ENCODE measurements at regions of chr3 and their contacts with region 1.

Region 1: GRCh38 chr3:27467545-27467944 is 16.6 kb downstream of the SLC4A7 start:
- DNase-seq: no peak
- H3K4me3 Mint-ChIP-seq: no peak overlapping the region
- H3K27ac Mint-ChIP-seq: no peak overlapping the region
- H3K4me1 Mint-ChIP-seq: peaks cover 9% of the 10 kb centered on the region
- H3K27me3 Mint-ChIP-seq: no peaks in the 10 kb centered on the region

Region 2: DNA sequence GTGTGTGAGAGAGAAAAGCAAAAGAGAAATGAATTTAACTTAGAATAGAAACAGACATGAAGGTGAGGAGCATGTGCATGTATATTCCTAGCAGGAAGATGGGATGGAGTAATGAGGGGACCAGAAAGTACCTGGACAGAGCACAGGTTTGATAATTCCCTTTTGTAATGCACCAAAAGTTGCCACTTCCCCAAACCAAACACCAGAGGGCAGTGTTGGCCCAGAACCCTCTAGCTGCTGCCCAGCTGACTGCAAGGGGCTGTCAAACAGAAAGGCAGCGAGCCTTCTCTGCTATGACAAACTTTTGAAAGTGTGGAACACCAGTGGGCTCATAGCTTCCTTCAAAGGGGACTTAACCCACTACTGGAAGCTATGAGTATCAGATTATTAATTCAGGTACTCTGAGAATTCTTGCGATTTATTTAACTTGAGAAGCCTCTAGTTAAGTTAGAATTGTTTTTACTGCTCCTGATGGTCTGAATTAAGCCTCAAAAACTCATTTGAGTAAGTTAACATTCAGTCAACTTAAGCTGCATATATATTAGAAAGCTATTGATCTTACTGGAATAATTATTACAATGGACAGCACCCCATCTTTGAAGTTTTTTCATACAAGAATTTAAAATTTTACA is 333.3 kb before region 1 on chr3:
- CTCF ChIA-PET with region 1: interaction called, 10 read pairs
- DNase-seq: peak; percentile 68
- H3K4me3 Mint-ChIP-seq: no peak overlapping the region
- H3K27ac Mint-ChIP-seq: no peak overlapping the region
- H3K4me1 Mint-ChIP-seq: no peaks in the 10 kb centered on the region
- H3K27me3 Mint-ChIP-seq: no peaks in the 10 kb centered on the region

Region 3: DNA sequence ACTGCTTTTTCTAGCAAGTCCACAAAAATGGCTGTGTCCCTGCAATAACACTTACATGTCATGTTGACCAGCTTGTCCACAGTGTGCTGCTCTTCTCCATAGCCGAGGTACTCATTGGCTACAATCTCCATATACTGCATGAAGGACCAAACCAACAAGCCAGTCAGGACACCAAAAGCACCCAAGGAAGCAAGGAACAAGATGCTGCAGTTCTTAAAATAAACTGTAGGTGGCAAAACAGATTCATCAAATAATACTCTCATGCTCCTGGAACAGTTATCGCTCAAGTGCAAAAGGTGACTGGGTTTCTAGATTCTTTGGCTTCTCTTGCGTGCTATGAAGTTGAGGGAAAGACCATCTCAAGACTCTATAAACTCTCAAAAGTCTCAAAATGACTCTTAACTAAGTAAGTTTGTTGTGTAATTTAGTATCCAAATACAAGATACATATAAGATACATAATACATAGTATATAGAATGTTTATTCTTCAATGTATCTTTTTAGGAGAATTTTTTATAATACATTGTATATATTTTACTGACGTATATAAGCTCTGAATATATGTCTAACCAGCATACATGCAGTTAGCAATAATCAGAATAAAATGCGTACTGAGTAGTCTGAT is 155.4 kb before region 1 on chr3:
- CTCF ChIA-PET with region 1: interaction called, 30 read pairs
- DNase-seq: no peak
- H3K4me3 Mint-ChIP-seq: no peak overlapping the region
- H3K27ac Mint-ChIP-seq: no peak overlapping the region
- H3K4me1 Mint-ChIP-seq: no peaks in the 10 kb centered on the region
- H3K27me3 Mint-ChIP-seq: peaks cover 10% of the 10 kb centered on the region

Region 4: GRCh38 chr3:27357665-27358258 is 109.8 kb before region 1 on chr3:
- CTCF ChIA-PET with region 1: interaction called, 16 read pairs
- DNase-seq: peak; percentile 71
- H3K4me3 Mint-ChIP-seq: no peak overlapping the region
- H3K27ac Mint-ChIP-seq: peak overlapping the region; percentile 24
- H3K4me1 Mint-ChIP-seq: peaks cover 34% of the 10 kb centered on the region
- H3K27me3 Mint-ChIP-seq: peaks cover 14% of the 10 kb centered on the region

Region 5: GRCh38 chr3:27681245-27681748 is 213.8 kb after region 1 on chr3:
- CTCF ChIA-PET with region 1: interaction called, 10 read pairs
- DNase-seq: peak; percentile 36
- H3K4me3 Mint-ChIP-seq: peak overlapping the region; percentile 49
- H3K27ac Mint-ChIP-seq: no peak overlapping the region
- H3K4me1 Mint-ChIP-seq: peaks cover 9% of the 10 kb centered on the region
- H3K27me3 Mint-ChIP-seq: peaks cover 14% of the 10 kb centered on the region

Measured in activated naive CD4-positive, alpha-beta T cell treated with anti-CD3 and anti-CD28 coated beads, Interleukin-2, amount 10 ng/mL, durations not matched to agents 7 days and 5 days (primary cell).